Ovary (tissue), 10 donors: ENCODE measurements at regions of chr10 and their contacts with region 1.

Region 1: DNA sequence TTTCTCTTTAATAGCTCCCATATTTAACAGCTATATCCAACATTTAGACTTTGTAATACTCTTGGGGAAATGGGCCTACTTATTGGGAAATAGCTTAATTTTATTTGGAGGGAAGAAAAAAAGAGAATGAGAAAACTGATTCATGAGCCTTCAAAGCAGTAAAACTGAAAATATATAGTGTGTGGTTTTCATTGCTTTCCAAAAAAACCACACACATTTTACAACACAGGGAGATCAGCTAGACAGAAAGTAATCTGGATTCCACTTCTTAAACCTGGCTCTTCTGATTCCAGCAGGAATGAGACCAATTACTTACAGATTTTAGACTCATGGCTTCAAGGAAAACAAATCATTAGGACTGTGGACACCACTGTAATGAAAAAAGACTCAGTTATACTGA is 48.7 kb downstream of the CH25H start:
- DNase-seq: no peak
- H3K4me3 ChIP-seq: no peak overlapping the region
- H3K27ac ChIP-seq: no peak overlapping the region
- H3K4me1 ChIP-seq: no peaks in the 10 kb centered on the region
- H3K27me3 ChIP-seq: no peaks in the 10 kb centered on the region
- CTCF ChIP-seq: no peak
- EP300 ChIP-seq: no peak
- POLR2A ChIP-seq: no peak

Region 2: DNA sequence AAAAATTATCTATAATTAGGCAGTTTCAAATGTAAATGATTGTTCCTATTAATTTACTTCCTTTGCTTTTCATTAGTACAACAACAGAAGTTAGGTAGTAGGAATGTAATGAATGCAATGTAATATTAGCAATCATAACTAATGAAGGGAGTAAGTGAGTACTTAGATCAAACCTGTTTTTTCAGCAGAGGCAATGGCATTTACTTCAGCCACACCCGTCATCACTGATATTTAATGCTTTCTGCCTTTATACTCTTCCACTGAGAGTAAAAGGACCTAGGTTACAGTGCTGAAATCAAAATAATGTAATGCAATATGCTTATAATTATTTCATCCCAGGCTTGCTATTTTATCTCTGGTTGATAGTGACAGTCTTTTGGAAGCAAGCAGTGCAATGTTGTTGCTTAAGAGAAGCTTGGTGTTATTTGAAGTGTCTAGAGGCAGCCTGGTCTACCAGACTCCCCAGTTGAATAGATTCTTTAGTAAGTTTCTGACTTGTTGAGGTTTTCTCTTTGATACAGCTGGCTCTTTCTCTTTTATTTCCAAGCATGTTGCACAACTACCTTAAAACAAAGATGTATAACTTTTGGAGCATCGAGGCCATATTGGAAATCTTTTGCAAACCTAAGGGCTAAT is 724.8 kb before region 1 on chr10:
- intact Hi-C with region 1: loop called in 1 of 4 experiments (anchors 5 kb)
- DNase-seq: no peak
- H3K4me3 ChIP-seq: no peak overlapping the region
- H3K27ac ChIP-seq: no peak overlapping the region
- H3K4me1 ChIP-seq: peaks cover 2% of the 10 kb centered on the region
- H3K27me3 ChIP-seq: no peaks in the 10 kb centered on the region
- CTCF ChIP-seq: no peak
- EP300 ChIP-seq: no peak
- POLR2A ChIP-seq: no peak